A673 (cell line): ENCODE measurements at regions of chr7 and their contacts with region 1.

Region 1: DNA sequence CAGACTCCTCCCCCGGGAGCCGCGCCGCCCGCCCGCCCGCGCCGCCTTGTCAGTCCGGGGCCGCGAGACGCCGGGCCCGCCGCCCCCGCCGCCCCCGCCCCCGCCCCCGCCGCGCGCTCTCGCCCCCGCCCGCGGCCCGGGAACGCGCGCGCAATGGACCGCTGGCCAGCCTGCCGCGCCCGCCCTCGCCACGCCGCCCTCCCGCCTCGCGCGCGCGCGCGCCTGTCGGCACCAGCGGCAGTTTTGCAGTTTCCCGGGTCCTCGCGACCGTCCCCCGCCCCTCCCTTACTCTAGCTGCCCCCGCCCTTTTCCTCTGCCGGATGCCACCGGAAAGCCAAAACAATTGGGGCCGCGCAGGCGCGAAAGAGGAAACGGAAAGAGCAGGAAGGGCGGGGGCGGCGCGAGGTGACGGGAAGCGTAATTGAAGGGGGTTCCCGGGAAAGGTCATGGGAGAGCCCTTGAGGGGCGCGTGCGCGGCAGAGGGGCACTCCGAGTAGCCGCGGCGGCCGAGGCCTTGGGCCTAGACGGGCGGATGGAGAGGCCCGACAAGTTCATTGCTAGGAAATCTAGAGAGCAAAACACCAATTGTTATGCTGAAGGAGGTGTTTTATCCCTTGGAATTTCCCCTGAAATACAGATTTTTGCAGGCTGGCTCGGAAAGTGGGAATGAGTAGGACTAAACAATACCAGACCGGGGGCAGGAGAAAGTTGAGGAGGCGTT is 400 bp upstream of the KBTBD2 start:
- DNase-seq: peak; percentile 99
- H3K4me3 ChIP-seq: peak overlapping the region; percentile 81
- H3K27ac ChIP-seq: peak overlapping the region; percentile 95
- H3K4me1 ChIP-seq: peaks cover 33% of the 10 kb centered on the region
- H3K27me3 ChIP-seq: no peaks in the 10 kb centered on the region
- CTCF ChIP-seq: no peak

Region 2: DNA sequence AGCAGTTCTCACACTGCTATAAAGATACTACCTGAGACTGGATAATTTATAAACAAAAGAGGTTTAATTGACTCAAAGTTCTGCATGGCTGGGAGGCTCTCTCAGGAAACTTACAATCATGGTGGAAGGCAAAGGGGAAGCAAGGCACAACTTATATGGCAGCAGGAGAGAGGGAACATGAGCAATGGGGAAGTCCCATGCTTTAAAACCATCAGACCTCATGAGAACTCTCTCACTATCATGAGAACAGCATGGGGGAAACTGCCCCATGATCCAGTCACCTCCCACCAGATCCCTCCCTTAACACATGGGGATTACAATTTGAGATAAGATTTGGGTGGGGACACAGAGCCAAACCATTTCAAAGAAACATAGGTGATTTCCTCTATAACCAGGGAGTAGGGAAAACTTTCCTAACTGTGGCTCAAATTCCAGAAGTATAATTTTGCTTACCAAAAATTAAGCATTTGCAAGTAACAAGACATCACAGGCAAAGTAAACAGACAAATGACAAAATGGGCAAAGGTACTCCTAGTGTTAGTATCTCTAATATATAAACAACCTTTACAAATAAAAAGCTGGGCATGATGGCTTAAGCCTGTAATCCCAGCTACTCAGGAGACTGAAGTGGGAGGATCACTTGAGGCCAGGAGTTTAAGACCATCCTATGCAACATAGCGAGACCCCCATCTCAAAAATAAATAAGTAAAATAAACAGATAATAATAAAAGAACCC is 88.4 kb before region 1 on chr7:
- CTCF ChIA-PET with region 1: no interaction called
- POLR2A ChIA-PET with region 1: no interaction called
- intact Hi-C with region 1: no loop called
- DNase-seq: no peak
- H3K4me3 ChIP-seq: no peak overlapping the region
- H3K27ac ChIP-seq: no peak overlapping the region
- H3K4me1 ChIP-seq: no peaks in the 10 kb centered on the region
- H3K27me3 ChIP-seq: no peaks in the 10 kb centered on the region
- CTCF ChIP-seq: no peak

Region 3: DNA sequence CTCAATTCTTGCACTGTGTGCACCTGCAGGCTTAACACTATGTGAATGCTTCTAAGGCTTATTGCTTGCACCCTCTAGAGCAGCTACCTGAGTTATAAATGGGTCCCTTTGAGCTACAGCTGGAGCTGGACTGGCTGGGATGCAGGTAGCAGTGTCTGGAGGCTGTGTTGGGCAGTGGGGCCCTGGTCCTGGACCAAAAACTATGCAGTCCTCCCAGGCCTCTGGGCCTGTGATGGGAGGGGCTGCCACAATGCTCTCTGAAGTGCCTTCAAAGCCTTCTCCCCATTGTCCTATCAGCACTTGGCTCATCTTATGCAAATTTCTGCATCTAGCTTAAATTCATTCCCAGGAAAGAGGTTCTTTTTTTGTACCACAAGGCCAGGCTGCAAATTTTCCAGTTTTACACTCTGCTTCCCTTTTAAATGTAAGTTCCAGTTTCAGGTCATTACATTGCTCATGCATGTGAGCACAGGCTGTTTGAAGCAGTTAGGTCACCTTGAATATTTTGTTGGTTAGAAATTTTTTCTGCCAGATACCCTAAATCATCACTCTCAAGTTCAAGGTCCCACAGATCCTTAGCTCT is 26.4 kb before region 1 on chr7:
- CTCF ChIA-PET with region 1: interaction called, 12 read pairs
- POLR2A ChIA-PET with region 1: no interaction called
- intact Hi-C with region 1: no loop called
- DNase-seq: no peak
- H3K4me3 ChIP-seq: no peak overlapping the region
- H3K27ac ChIP-seq: no peak overlapping the region
- H3K4me1 ChIP-seq: no peaks in the 10 kb centered on the region
- H3K27me3 ChIP-seq: no peaks in the 10 kb centered on the region
- CTCF ChIP-seq: no peak

Region 4: DNA sequence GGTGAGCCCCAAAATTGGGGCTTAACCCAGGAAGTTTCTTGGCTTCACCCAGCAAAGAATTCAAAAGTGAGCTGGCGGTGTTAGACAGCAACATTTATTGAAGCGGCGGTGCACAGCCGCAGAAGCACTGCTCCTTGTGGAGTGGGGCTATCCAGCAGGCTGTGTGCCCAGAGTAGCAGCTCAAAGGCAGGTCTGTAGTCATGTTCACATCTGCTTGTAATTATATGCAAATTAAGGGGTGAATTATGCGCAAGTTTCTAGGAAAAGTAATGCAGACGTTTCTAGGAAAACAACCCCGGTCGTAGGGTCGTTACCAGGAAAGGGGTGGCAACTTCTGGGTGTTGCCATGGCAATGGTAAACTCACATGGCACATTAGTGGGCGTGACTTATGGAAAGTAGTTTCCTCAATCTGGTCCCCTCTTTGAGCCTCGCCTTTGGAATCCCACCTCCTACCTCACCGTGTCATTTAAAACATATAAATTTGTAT is 13.3 kb after region 1 on chr7:
- CTCF ChIA-PET with region 1: no interaction called
- POLR2A ChIA-PET with region 1: no interaction called
- intact Hi-C with region 1: loop called (anchors 1 kb)
- DNase-seq: peak; percentile 98
- H3K4me3 ChIP-seq: peak overlapping the region; percentile 43
- H3K27ac ChIP-seq: peak overlapping the region; percentile 80
- H3K4me1 ChIP-seq: peaks cover 4% of the 10 kb centered on the region
- H3K27me3 ChIP-seq: no peaks in the 10 kb centered on the region
- CTCF ChIP-seq: no peak

Region 5: GRCh38 chr7:32928785-32929298 is 36.9 kb after region 1 on chr7:
- CTCF ChIA-PET with region 1: no interaction called
- POLR2A ChIA-PET with region 1: no interaction called
- intact Hi-C with region 1: no loop called
- DNase-seq: no peak
- H3K4me3 ChIP-seq: no peak overlapping the region
- H3K27ac ChIP-seq: no peak overlapping the region
- H3K4me1 ChIP-seq: no peaks in the 10 kb centered on the region
- H3K27me3 ChIP-seq: no peaks in the 10 kb centered on the region
- CTCF ChIP-seq: no peak

Region 6: DNA sequence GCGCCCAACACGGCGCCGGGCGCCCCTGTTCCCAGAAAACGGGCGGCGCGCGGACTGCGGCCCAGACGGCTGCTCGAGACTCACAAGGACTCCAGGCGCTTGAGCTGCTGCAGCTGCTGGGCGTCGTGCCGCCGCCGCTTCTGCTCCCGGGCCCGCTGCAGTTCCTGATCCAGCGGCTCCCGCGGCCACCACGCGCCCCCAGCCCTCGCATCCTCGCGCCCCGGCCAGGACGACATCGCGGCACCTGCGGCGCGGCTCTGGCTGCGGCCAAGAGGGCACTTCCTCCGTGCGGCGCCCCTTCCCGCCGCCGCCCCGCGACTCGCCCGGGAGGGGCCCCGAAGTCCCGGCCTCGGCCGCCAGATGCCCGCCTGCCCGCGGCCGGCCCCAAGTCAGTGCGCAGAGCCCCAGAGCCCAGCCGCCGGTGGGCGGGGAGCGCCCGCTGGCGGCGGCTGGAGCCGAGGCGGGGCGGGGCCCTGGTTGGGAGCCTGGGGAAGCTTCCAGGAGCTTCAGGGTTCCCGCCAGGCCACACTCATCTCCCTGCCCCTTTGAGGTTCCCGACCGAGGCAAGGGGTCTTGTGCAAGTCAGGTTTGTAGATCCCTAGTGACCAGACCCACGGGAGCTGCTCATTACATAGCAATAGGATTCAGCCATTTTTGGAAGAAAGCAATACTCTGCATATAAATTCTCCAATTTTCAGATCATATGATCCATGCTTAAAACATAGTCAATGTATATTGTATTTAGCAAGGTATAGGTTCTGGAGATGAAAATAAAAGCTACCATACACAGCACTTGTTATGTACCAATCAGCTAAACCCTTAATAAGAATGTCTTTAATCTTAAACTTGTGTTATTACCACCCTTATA is 51.1 kb after region 1 on chr7:
- CTCF ChIA-PET with region 1: interaction called, 4 read pairs
- POLR2A ChIA-PET with region 1: interaction called, 5 read pairs
- intact Hi-C with region 1: loop called (anchors 5 kb)
- DNase-seq: peak; percentile 92
- H3K4me3 ChIP-seq: peak overlapping the region; percentile 86
- H3K27ac ChIP-seq: peak overlapping the region; percentile 91
- H3K4me1 ChIP-seq: peaks cover 7% of the 10 kb centered on the region
- H3K27me3 ChIP-seq: no peaks in the 10 kb centered on the region
- CTCF ChIP-seq: peak; percentile 60

Region 7: DNA sequence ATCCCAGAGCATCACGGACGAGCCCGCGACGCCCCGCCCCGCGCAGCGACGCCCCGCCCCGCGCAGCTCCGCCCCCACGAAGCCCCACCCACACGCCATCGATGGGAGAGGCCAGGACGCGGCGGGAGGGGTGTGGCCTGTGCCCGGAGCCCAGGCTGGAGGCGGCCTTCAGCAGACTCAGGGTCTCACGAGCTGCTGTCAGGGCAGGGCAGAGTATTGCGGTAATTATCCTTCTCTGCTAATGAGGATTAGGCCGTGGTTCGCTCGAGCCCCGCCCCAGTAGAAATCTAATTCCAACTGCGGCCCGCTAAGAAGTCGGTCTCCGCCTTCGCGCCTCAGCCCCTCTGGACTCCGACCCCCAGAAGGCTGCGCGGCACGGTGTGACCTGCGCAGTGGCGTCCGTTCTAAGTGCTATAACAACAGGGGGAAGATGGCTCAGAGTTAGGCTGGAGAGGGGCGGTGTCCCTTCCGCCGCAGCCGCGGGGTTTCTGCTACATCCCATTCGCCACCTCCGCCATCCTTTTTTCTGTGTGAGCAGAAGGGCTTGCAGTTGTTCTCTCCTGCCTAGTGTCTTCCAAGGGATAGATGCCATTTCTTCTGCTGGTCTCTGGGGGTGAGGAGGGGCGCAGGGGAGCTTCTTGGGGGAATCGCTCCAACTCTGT is 171.0 kb after region 1 on chr7:
- CTCF ChIA-PET with region 1: no interaction called
- POLR2A ChIA-PET with region 1: no interaction called
- intact Hi-C with region 1: loop called (anchors 5 kb)
- DNase-seq: peak; percentile 98
- H3K4me3 ChIP-seq: peak overlapping the region; percentile 70
- H3K27ac ChIP-seq: peak overlapping the region; percentile 96
- H3K4me1 ChIP-seq: peaks cover 15% of the 10 kb centered on the region
- H3K27me3 ChIP-seq: no peaks in the 10 kb centered on the region
- CTCF ChIP-seq: no peak

Region 8: DNA sequence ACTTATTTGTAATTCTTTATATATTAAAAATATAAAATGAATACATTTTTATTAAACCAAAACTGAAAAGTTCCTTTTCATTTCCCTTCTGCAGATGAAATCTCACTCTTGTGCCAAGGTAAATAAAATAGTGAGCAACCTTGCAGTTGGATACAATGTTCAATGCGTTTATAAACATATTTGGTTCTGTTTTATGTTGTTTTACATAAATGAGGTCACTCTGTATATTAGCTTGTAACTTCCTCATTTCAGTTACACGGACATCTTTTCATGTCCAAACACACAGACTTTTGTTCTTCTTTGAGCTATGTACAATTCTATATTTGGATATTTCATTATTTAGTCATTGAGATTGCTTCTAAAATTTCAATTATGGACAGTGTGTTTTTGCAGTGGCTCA is 345.1 kb after region 1 on chr7:
- CTCF ChIA-PET with region 1: no interaction called
- POLR2A ChIA-PET with region 1: no interaction called
- intact Hi-C with region 1: no loop called
- DNase-seq: no peak
- H3K4me3 ChIP-seq: no peak overlapping the region
- H3K27ac ChIP-seq: no peak overlapping the region
- H3K4me1 ChIP-seq: no peaks in the 10 kb centered on the region
- H3K27me3 ChIP-seq: no peaks in the 10 kb centered on the region
- CTCF ChIP-seq: no peak